ENCODE measurements at regions of chr6 and their contacts with region 1.

Region 1: GRCh38 chr6:89122625-89123024 is 4.8 kb upstream of the SRSF12 start:
- DNase-seq: no peak
- ATAC-seq: peak; percentile 61 to 64
- H3K4me3 ChIP-seq: no peak overlapping the region
- H3K27ac ChIP-seq: no peak overlapping the region
- H3K4me1 ChIP-seq: peaks cover 0 to 5% of the 10 kb centered on the region in 2 donors
- H3K27me3 ChIP-seq: no peaks in the 10 kb centered on the region
- CTCF ChIP-seq: peak; percentile 16 to 54 (median 50)
- POLR2A ChIP-seq: no peak

Region 2: DNA sequence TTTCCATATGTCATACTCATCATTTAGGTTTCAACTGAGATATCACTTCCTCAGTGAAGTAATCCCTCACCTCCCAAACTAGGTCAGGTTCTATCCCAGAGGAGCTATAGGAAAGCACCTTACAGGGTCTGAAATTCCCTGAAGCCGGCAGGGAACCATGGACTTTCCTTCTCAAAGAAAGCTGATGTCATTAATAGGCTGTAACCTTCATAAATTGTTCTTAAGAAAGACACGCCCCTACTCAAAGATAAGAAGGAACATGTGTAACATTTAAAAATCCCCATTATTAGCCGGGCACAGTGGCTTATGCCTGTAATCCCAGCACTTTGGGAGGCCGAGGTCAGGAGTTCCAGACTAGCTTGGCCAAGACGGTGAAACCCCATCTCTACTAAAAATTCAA is 109.2 kb before region 1 on chr6:
- in situ Hi-C with region 1: no loop called
- intact Hi-C with region 1: no loop called
- DNase-seq: no peak
- ATAC-seq: no peak
- H3K4me3 ChIP-seq: no peak overlapping the region
- H3K27ac ChIP-seq: no peak overlapping the region
- H3K4me1 ChIP-seq: no peaks in the 10 kb centered on the region
- H3K27me3 ChIP-seq: no peaks in the 10 kb centered on the region
- CTCF ChIP-seq: no peak
- POLR2A ChIP-seq: no peak

Region 3: DNA sequence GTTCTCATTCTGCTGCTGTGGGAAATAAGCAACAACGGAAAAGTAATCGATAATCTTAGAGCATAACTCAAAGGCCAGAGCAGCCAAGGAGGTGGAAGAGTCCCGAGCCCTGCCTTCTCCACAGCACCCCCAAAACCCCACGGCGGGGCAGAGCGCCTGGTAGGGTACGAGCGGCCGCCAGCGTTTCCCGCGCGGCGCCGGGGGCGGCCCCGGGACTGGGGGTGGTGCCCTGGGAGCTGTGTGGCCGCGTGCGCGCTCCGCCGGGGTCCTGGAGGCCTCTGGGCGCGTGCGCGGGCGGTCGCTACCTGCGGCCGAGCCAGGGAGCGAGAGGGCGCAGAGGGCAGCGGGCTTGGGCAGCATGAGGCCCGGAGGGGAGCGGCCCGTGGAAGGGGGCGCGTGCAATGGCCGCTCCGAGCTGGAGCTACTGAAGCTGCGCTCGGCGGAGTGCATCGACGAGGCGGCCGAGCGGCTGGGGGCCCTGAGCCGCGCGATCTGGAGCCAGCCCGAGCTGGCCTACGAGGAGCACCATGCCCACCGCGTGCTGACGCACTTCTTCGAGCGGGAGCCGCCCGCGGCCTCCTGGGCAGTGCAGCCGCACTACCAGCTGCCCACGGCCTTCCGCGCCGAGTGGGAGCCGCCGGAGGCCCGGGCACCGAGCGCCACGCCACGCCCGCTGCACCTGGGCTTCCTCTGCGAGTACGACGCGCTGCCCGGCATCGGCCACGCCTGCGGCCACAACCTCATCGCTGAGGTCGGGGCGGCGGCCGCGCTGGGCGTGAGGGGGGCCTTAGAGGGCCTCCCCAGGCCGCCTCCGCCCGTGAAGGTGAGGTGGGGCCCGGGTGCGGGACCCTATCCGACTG is 23.4 kb after region 1 on chr6 and contains the start of gene PM20D2:
- in situ Hi-C with region 1: no loop called
- intact Hi-C with region 1: loop called (anchors 2 kb)
- DNase-seq: peak; percentile 54 to 75
- ATAC-seq: peak; percentile 67 to 71
- H3K4me3 ChIP-seq: peak within 1 kb of the TSS; percentile 74 to 90 (median 82)
- H3K27ac ChIP-seq: peak within 1 kb of the TSS; percentile 94 to 99 (median 98)
- H3K4me1 ChIP-seq: peaks cover 23 to 25% of the 10 kb centered on the region in 2 donors
- H3K27me3 ChIP-seq: no peaks in the 10 kb centered on the region
- CTCF ChIP-seq: no peak
- POLR2A ChIP-seq: peak; percentile 85 to 88
- total RNA-seq, gene PM20D2: 18.1 to 54.6 (median 26.3) TPM

Region 4: GRCh38 chr6:89186762-89187161 is 64.1 kb after region 1 on chr6:
- in situ Hi-C with region 1: no loop called
- intact Hi-C with region 1: loop called (anchors 2 kb)
- DNase-seq: peak; percentile 84 to 98
- ATAC-seq: peak; percentile 98
- H3K4me3 ChIP-seq: no peak overlapping the region
- H3K27ac ChIP-seq: peak overlapping the region; percentile 76 to 95 (median 84)
- H3K4me1 ChIP-seq: peaks cover 8 to 18% of the 10 kb centered on the region in 2 donors
- H3K27me3 ChIP-seq: no peaks in the 10 kb centered on the region
- CTCF ChIP-seq: no peak
- POLR2A ChIP-seq: peak; percentile 82 to 92

Region 5: GRCh38 chr6:89242574-89243330 is 120.1 kb after region 1 on chr6:
- in situ Hi-C with region 1: loop called in 3 of 4 experiments (anchors 5 to 10 kb)
- intact Hi-C with region 1: loop called (anchors 1 kb)
- DNase-seq: no peak
- ATAC-seq: peak; percentile 70 to 74
- H3K4me3 ChIP-seq: no peak overlapping the region
- H3K27ac ChIP-seq: no peak overlapping the region
- H3K4me1 ChIP-seq: peaks cover 0 to 3% of the 10 kb centered on the region in 2 donors
- H3K27me3 ChIP-seq: no peaks in the 10 kb centered on the region
- CTCF ChIP-seq: peak; percentile 65 to 84 (median 67)
- POLR2A ChIP-seq: no peak

Measured in gastrocnemius medialis (tissue), 4 donors.